ENCODE measurements at regions of chr3 and their contacts with region 1.

Region 1: GRCh38 chr3:124671106-124671505 is 59.1 kb upstream of the UMPS start:
- DNase-seq: no peak
- ATAC-seq: no peak
- H3K4me3 ChIP-seq: no peak overlapping the region
- H3K27ac ChIP-seq: no peak overlapping the region
- H3K4me1 ChIP-seq: no peaks in the 10 kb centered on the region
- H3K27me3 ChIP-seq: no peaks in the 10 kb centered on the region
- CTCF ChIP-seq: no peak
- POLR2A ChIP-seq: no peak
- RAD21 ChIP-seq: no peak

Region 2: DNA sequence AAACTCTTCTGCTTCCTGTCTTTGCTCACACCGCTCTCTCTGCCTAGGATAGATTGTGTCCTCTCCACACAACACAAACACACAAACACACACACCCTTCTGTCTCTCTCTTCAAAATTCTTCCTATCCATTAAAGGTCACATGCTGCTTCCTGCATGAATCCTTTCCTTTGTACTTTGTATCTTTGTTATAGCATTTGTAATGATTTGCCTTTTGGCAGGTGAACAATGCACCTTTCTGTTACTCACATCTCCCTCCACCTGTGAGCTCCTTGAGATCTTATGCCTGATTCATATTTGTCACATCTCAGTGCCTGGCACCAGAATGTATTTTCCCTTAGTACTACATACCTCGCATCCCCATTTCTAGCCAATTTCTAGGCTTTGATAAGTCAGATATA is 192.3 kb before region 1 on chr3:
- CTCF ChIA-PET with region 1: no interaction called
- POLR2A ChIA-PET with region 1: no interaction called
- RAD21 ChIA-PET with region 1: no interaction called
- intact Hi-C with region 1: no loop called
- DNase-seq: no peak
- ATAC-seq: no peak
- H3K4me3 ChIP-seq: no peak overlapping the region
- H3K27ac ChIP-seq: no peak overlapping the region
- H3K4me1 ChIP-seq: no peaks in the 10 kb centered on the region; a peak in 1 of 4 replicates
- H3K27me3 ChIP-seq: peaks cover 67% of the 10 kb centered on the region
- CTCF ChIP-seq: no peak
- POLR2A ChIP-seq: no peak
- RAD21 ChIP-seq: no peak

Region 3: DNA sequence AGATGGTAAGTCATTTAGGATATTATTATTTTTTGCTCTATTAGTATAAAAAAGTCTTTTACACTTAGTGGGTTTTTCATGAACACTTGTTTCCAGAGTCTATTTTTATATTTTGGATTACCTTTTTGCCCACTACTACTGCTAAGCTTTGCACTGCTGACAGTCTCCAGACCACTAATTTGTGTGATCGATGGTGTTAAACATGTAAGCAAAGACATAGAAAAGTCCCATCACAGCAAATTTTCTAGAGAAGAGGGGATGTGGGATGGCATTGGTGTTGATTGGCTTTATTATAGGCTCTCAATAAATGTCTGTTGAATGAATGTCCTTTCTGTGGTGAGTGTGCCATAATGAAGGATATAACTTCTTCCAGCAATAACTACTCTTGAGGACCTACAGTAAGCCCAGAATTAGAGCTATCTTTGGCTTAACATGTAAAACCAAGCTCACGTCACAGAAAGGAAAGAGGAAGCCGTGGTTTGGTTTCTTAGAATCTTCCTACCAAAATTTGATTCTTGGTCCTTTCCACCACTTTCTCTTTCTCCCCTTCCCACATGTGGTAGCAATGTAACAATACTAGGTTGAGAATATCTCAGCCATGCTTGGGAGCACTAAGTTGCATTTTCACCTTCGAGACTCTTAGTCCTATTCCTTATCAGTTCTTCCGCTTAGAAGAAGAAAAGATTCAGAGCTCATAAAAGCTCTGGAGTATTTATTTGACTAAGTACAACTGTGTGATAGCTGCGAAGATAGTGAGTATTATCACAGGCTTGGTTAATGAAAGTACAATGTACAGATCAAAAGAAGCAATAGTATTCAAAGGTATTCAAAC is 31.5 kb before region 1 on chr3:
- CTCF ChIA-PET with region 1: no interaction called
- POLR2A ChIA-PET with region 1: no interaction called
- RAD21 ChIA-PET with region 1: no interaction called
- intact Hi-C with region 1: loop called (anchors 5 kb)
- DNase-seq: no peak
- ATAC-seq: no peak
- H3K4me3 ChIP-seq: no peak overlapping the region
- H3K27ac ChIP-seq: no peak overlapping the region
- H3K4me1 ChIP-seq: no peaks in the 10 kb centered on the region
- H3K27me3 ChIP-seq: no peaks in the 10 kb centered on the region
- CTCF ChIP-seq: no peak
- POLR2A ChIP-seq: no peak
- RAD21 ChIP-seq: no peak